ENCODE measurements at regions of chr11 and their contacts with region 1.

Region 1: GRCh38 chr11:45110562-45110961 is 35.9 kb upstream of the PRDM11 start:
- DNase-seq: peak; percentile 59
- H3K4me3 ChIP-seq: no peak overlapping the region
- H3K27ac ChIP-seq: no peak overlapping the region
- H3K4me1 ChIP-seq: no peaks in the 10 kb centered on the region
- H3K27me3 ChIP-seq: no peaks in the 10 kb centered on the region
- CTCF ChIP-seq: peak; percentile 61

Region 2: DNA sequence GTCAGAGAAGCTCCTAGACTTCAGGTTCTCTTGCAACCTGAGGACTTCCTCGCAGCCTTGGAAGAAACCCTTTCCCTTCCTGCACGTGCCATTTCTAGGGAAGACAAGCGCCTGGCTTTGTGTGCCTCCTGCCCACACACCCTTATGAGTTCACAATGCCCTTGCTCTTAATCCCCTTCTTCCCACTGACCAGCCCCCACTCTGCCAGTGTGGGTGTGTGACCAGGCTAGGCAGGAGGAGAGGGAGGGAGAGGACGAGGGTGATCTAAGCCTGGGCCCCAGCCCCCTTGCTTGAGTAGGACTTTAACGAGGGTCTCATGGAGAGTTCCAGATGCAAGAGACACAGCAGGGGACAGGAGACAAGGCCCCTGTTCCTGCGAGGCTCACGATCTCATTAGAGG is 190.1 kb before region 1 on chr11:
- intact Hi-C with region 1: no loop called
- DNase-seq: no peak
- H3K4me3 ChIP-seq: no peak overlapping the region
- H3K27ac ChIP-seq: no peak overlapping the region
- H3K4me1 ChIP-seq: no peaks in the 10 kb centered on the region
- H3K27me3 ChIP-seq: no peaks in the 10 kb centered on the region
- CTCF ChIP-seq: no peak

Region 3: DNA sequence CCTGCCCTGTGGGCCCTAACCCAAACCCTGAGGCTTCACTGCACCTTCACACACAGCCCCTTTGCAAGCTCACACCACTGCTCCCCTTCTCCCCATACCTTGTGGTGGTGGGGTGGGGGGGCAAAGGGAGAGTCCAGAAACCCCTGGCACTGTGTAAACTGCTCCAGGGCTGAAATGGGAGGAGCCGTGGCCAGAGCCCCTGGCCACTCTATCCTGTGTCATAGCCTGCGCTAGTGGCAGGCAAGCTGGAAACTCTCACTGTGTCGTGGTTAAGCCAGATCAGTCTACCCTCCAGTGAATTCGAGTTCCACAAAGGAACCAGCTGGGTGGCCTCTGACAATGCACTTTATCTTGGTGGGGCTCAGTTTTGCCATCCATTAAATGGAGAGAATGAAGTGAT is 183.9 kb after region 1 on chr11:
- intact Hi-C with region 1: loop called (anchors 2 kb)
- DNase-seq: no peak
- H3K4me3 ChIP-seq: no peak overlapping the region
- H3K27ac ChIP-seq: no peak overlapping the region
- H3K4me1 ChIP-seq: no peaks in the 10 kb centered on the region
- H3K27me3 ChIP-seq: no peaks in the 10 kb centered on the region
- CTCF ChIP-seq: no peak

Region 4: DNA sequence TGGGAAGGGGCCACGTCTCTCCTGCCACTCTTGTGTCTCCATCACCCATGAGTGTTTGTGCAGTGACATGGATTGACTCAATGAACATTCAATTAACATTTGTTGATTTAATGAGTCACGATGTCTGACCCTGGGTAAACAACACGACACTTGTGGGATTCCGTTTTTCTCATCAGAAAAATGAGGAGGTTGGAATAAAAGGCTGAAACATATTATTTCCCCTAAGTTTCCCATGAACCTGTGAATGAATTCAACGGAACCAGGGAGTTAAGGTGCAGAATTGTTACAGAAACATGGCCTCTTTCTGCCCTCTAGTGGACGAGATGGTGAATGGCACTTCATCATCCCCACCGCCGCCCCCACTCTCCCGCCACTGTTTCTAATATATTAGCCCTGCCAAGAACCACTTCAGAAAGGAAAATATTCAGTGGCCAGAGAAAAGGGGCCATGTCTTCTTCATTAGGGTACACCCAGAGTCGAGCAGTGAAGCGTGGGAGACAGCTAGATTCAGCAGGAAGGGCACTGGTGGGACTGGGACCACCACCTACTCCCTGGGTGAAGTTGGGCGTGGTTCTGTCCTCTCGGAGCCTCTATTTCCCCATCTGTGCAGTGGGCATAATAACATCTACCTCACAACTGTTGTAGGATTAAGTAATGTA is 221.8 kb after region 1 on chr11:
- intact Hi-C with region 1: loop called (anchors 2 kb)
- DNase-seq: peak; percentile 38
- H3K4me3 ChIP-seq: no peak overlapping the region
- H3K27ac ChIP-seq: no peak overlapping the region
- H3K4me1 ChIP-seq: no peaks in the 10 kb centered on the region
- H3K27me3 ChIP-seq: no peaks in the 10 kb centered on the region
- CTCF ChIP-seq: peak; percentile 82

Measured in colonic mucosa (tissue), 4 donors.